Heart right ventricle (tissue), 16 donors: ENCODE measurements at regions of chr2 and their contacts with region 1.

Region 1: GRCh38 chr2:62760555-62760954 is 55.0 kb downstream of the EHBP1 start:
- DNase-seq: no peak
- ATAC-seq: peak in 1 of 8 donors; percentile 56
- H3K4me3 ChIP-seq: no peak overlapping the region
- H3K27ac ChIP-seq: no peak overlapping the region
- H3K4me1 ChIP-seq: no peaks in the 10 kb centered on the region
- H3K27me3 ChIP-seq: no peaks in the 10 kb centered on the region
- CTCF ChIP-seq: no peak

Region 2: DNA sequence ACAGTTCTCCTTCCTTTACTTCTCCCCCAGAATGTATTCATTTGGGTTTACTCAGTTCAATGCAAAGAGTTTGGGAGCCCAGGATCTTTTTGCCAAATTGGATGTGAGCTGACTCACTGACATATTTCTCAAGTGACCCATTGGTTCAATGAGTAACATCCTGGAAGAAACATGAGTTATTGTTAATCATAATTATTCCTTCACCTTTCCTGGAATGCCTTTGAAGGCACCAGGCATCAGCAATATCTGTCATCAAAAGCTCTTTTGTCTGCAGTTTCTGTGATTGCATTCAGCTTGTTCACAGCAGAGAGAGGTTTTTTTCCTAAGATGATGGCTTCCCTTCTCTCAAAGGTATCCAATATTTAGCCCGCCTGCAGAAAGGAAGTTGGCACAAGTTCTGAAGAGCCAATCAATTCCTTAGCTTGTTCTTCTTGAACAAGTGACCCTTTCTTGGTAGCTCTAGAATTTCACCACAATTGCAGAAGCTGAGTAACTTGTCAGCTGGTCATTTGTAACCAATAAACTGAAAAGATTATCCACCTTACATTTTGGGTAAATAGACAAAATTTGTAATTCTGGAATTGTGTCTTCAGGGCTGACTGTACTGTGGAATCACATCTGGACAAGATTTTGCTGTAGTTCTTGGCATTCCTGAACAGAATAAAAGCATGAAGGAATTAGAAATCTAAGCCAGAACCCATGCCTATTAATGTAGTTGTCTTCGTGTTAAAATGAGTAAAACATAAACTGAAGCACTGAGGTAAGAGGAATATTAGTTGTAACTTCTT is 182.4 kb before region 1 on chr2:
- intact Hi-C with region 1: no loop called
- DNase-seq: no peak
- ATAC-seq: peak in 1 of 8 donors; percentile 52
- H3K4me3 ChIP-seq: no peak overlapping the region
- H3K27ac ChIP-seq: no peak overlapping the region
- H3K4me1 ChIP-seq: peaks cover 0 to 13% (median 0%) of the 10 kb centered on the region in 9 donors
- H3K27me3 ChIP-seq: no peaks in the 10 kb centered on the region
- CTCF ChIP-seq: no peak

Region 3: DNA sequence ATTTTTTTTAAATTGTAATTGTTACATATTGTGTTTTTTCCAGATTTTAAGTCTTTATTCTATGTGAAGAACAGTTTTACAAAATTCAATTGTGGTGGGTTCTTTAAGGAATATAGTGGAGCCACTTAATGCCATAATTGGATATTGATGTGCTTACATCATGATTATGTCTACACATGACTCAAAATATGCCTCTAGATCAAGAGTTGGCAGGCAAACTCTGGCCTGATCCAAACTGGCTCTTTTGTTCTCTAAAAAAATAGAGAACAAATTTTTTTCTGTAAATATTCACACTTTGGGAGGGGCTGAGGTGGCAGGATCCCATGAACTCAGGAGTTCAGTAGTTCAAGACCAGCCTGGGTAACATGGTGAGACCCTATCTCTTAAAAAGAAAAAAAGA is 46.7 kb before region 1 on chr2:
- intact Hi-C with region 1: loop called in 1 of 10 experiments (anchors 10 kb)
- DNase-seq: no peak
- ATAC-seq: no peak
- H3K4me3 ChIP-seq: no peak overlapping the region
- H3K27ac ChIP-seq: no peak overlapping the region
- H3K4me1 ChIP-seq: peaks cover 0 to 19% (median 7%) of the 10 kb centered on the region in 9 donors
- H3K27me3 ChIP-seq: no peaks in the 10 kb centered on the region
- CTCF ChIP-seq: no peak

Region 4: DNA sequence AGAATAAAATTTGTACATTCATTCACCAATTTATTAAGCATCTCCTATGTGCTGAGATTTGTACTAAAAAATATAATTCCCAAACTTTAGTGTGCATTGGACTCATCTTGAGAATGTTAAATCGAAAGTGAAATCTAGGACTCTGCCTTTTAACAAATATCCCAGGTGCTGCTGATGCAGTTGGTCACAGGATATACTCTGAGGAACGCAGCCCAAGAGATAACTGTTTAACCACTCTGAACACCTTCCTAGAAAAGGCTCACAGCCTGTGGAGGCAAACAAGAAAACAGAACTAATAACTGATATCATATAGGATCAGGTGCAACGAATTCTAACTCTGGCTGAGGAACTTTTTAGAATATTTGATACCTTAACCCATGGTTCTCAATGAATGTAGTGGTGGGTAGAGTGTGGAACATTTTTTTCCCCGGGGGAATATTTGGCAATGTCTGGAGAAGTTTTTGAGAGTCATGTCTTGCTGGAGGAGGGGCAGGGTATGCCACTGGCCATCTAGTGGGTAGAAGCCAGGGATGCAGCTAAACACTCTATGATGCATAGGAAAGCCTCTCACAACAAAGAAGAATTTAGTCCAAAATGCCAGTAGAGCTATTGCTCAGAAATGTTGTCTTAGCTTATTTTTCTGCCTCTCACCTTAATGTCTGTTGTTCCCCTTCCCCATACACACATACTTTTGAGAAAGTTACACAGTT is 41.4 kb after region 1 on chr2:
- intact Hi-C with region 1: no loop called
- DNase-seq: no peak
- ATAC-seq: no peak
- H3K4me3 ChIP-seq: no peak overlapping the region
- H3K27ac ChIP-seq: no peak overlapping the region
- H3K4me1 ChIP-seq: peaks cover 0 to 5% (median 0%) of the 10 kb centered on the region in 9 donors
- H3K27me3 ChIP-seq: no peaks in the 10 kb centered on the region
- CTCF ChIP-seq: no peak